H1 (cell line): ENCODE measurements at regions of chr15 and their contacts with region 1.

Region 1: DNA sequence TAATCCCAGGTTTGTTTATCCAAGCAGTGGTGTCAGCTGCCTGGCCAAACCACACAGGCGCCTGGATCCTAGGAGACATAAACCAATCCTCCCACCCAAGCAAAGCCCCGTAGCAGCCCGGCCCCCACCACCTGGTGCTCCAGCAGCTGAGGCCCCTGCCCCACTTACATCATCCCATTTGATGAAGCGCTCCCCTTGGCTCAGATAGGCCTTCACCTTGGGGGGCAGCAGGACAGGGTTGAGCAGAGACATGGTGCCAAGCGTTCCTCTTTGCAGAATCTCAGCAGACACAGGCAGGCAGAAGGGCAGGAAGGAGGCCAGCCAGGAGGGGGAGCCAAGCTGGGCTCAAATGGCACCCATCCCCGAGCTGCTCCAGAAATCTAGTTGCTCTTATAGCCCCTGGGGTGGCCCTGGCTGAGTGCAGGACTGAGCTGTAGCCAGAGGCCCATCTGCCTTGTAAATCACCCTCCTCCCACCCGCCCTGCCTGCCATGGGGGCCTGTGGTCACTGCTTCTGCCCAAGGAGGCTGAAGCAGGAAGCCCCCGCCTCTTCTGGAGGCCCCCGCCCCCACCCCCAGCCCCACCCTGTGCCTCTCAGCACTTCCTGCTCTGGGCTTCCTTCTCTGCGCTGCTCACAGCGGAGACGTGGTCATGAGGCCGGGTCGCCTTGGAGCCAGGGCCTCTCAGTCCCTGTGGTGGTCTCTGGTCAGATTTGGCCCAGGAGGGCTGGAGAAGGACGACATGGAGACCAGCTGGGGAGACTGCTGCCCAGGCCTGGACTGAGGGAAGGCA is at the start of gene PLCB2:
- DNase-seq: no peak
- H3K4me3 ChIP-seq: 0 out of 8 replicates have a peak within 1 kb of the TSS, but pooled peaks of 1 of the 4 experiments have one; percentile 19
- H3K27ac ChIP-seq: no peak within 1 kb of the TSS
- H3K4me1 ChIP-seq: peaks cover 0 to 29% (median 21%) of the 10 kb centered on the region in 4 experiments; a peak in 6 of 7 replicates
- H3K27me3 ChIP-seq: peaks cover 0 to 6% (median 0%) of the 10 kb centered on the region in 4 experiments; a peak in 3 of 7 replicates
- CTCF ChIP-seq: peak; percentile 30 to 60 (median 52); a peak in 3 of 4 replicates
- EP300 ChIP-seq: no peak
- POLR2A ChIP-seq: no peak
- RAD21 ChIP-seq: peak in 1 of 2 experiments; percentile 24; a peak in 1 of 4 replicates
- total RNA-seq, gene PLCB2: 8.4 and 9.4 TPM in 2 replicates

Region 2: GRCh38 chr15:40232625-40233070 is 75.0 kb before region 1 on chr15:
- CTCF ChIA-PET with region 1: interaction called, 16 read pairs
- POLR2A ChIA-PET with region 1: interaction called, 4 read pairs
- DNase-seq: peak in 1 of 2 experiments; percentile 47
- H3K4me3 ChIP-seq: no peak overlapping the region
- H3K27ac ChIP-seq: no peak overlapping the region
- H3K4me1 ChIP-seq: no peaks in the 10 kb centered on the region; a peak in 1 of 7 replicates
- H3K27me3 ChIP-seq: no peaks in the 10 kb centered on the region
- CTCF ChIP-seq: no peak
- EP300 ChIP-seq: no peak
- POLR2A ChIP-seq: no peak
- RAD21 ChIP-seq: no peak

Region 3: DNA sequence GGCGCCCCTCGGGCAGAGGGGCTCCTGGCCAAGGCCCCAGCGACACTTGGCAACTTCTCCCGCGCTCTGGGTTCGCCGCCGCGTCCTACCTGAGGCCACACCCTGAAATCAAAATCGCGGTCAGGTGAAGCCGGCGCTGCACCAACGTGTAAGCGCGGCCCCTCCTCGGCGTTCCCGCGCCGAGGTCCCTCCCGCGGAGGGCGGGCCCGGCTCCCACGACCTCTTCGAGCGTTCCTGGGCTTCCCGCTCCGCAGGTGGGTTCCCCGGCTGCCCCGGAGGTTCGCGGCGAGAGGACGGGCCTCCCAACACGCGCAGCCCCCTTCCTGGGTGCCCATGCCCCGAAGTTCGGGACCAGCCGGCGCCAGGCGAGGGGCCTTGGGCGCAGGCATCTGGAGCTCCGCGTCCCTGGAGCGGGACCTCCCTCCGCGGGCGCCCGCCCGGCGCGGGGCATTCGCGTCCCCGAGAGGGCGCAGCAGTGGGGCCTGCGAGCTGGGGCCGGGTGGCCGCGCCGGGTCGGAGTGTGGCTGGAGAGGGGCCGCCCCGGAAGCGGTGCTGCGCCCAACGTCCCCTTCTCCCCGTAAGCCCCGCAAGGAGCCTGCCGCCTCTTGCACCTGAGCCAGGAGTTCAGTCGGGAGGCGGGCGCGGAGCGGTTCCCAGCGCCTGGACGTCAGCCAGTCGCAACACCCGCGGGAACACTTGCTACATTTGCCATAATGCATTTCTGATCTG is 55.0 kb before region 1 on chr15:
- CTCF ChIA-PET with region 1: interaction called, 12 read pairs
- POLR2A ChIA-PET with region 1: no interaction called
- DNase-seq: peak in 1 of 2 experiments; percentile 76
- H3K4me3 ChIP-seq: peak overlapping the region; percentile 50 to 71 (median 54)
- H3K27ac ChIP-seq: no peak overlapping the region
- H3K4me1 ChIP-seq: peaks cover 0 to 10% (median 7%) of the 10 kb centered on the region in 4 experiments; a peak in 5 of 7 replicates
- H3K27me3 ChIP-seq: peaks cover 11 to 41% (median 32%) of the 10 kb centered on the region in 4 experiments
- CTCF ChIP-seq: no peak
- EP300 ChIP-seq: no peak
- POLR2A ChIP-seq: peak in 1 of 2 experiments; percentile 30; a peak in 1 of 3 replicates
- RAD21 ChIP-seq: no peak

Region 4: GRCh38 chr15:40282144-40282868 is 25.3 kb before region 1 on chr15:
- CTCF ChIA-PET with region 1: interaction called, 531 read pairs
- POLR2A ChIA-PET with region 1: interaction called, 29 read pairs
- DNase-seq: peak in 1 of 2 experiments; percentile 86
- H3K4me3 ChIP-seq: peak overlapping the region; percentile 21 to 61 (median 32)
- H3K27ac ChIP-seq: no peak overlapping the region
- H3K4me1 ChIP-seq: peaks cover 17 to 47% (median 34%) of the 10 kb centered on the region in 4 experiments
- H3K27me3 ChIP-seq: peaks cover 40 to 69% (median 54%) of the 10 kb centered on the region in 4 experiments
- CTCF ChIP-seq: peak in 2 of 3 experiments; percentile 38 to 60; a peak in 3 of 4 replicates
- EP300 ChIP-seq: no peak
- POLR2A ChIP-seq: no peak
- RAD21 ChIP-seq: peak; percentile 1 to 26; a peak in 2 of 4 replicates

Region 5: DNA sequence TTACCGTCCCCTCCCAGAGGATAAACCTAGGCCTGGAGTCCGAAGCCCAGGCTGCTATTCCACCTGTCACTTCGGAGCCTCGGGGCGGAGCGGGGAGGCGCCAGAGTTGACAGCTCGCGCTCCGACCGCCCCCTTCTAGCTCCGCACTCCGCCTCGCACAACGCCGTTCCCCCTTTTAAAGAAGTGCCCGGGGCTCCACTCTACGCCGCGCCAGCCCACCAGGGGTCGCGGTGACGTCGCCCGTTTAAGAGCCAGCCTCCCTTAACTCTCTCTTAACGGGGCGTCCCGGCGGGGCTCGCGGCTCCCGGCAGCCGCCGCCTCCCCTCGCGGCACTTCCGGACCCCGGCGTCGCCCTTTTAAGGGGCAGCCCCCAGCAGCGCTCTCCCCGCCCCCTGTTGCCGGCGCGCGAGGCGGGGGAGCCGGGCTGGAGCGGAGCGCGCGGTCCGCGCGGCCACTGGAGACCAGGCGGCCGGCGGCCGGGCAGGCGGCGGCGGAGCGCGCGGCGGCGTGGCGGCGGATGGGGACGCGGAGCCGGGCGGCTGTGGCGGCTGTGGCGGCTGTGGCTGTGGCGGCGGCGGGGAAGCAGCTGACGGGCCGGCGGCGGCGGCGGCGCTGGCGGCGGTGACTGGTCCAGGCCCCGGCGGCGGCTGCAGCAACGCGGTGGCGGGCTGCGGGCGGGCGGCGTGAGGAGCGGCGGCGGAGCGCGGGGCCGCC is 15.8 kb after region 1 on chr15 and contains the start of gene INAFM2:
- CTCF ChIA-PET with region 1: interaction called, 254 read pairs
- POLR2A ChIA-PET with region 1: interaction called, 6 read pairs
- DNase-seq: peak; percentile 90 to 92
- H3K4me3 ChIP-seq: peak within 1 kb of the TSS; percentile 62 to 79 (median 70)
- H3K27ac ChIP-seq: no peak within 1 kb of the TSS
- H3K4me1 ChIP-seq: peaks cover 21 to 44% (median 31%) of the 10 kb centered on the region in 4 experiments
- H3K27me3 ChIP-seq: peaks cover 0 to 20% (median 9%) of the 10 kb centered on the region in 4 experiments; a peak in 4 of 7 replicates
- CTCF ChIP-seq: peak; percentile 22 to 36 (median 30)
- EP300 ChIP-seq: peak in 1 of 2 experiments; percentile 58; a peak in 1 of 3 replicates
- POLR2A ChIP-seq: peak in 1 of 2 experiments; percentile 49; a peak in 1 of 3 replicates
- RAD21 ChIP-seq: peak in 1 of 2 experiments; percentile 20; a peak in 1 of 4 replicates
- total RNA-seq, gene INAFM2: 35.1 and 38.2 TPM in 2 replicates

Region 6: GRCh38 chr15:40361640-40362039 is 54.0 kb after region 1 on chr15:
- CTCF ChIA-PET with region 1: no interaction called
- POLR2A ChIA-PET with region 1: no interaction called
- DNase-seq: no peak
- H3K4me3 ChIP-seq: no peak overlapping the region
- H3K27ac ChIP-seq: no peak overlapping the region
- H3K4me1 ChIP-seq: peaks cover 0 to 10% (median 6%) of the 10 kb centered on the region in 4 experiments; a peak in 6 of 7 replicates
- H3K27me3 ChIP-seq: peaks cover 0 to 19% (median 7%) of the 10 kb centered on the region in 4 experiments; a peak in 4 of 7 replicates
- CTCF ChIP-seq: no peak
- EP300 ChIP-seq: no peak
- POLR2A ChIP-seq: no peak
- RAD21 ChIP-seq: no peak